ENCODE measurements at regions of chr4 and their contacts with region 1.

Region 1: DNA sequence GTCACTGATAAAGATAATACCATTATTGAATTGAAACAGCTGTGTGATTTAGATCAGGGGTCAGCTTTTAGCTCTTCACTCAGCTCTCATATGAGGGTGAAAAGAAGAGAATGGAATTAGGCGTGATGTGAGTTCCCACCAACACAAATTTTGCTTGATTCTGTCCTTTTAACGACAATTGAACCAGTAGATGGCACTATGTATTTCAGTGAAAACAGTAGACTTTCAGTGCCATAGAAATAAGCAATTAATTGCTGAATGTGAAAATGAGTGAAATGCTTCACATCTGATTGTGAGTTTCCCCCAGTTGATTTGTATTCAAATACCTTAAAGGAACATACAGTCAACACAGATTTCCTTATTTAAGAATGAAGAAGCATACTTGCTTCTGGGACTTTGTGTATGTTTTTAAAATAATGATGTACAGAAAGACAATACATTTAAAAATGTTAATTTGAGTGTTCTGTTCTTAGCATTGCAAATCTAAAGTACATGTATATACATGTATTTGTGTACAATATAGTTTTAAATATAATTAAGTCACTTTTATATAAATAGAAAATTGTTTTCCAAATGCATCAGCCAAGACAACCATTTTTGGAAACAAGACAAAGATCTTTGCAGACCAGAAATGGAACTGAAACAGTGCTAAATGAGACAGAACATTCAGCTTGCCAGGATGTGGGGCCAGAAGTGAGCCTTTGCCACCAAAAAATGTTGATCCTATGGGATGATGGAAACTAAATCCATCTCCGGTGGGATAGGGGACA is 178.8 kb downstream of the SNCA start:
- DNase-seq: no peak
- ATAC-seq: no peak

Region 2: DNA sequence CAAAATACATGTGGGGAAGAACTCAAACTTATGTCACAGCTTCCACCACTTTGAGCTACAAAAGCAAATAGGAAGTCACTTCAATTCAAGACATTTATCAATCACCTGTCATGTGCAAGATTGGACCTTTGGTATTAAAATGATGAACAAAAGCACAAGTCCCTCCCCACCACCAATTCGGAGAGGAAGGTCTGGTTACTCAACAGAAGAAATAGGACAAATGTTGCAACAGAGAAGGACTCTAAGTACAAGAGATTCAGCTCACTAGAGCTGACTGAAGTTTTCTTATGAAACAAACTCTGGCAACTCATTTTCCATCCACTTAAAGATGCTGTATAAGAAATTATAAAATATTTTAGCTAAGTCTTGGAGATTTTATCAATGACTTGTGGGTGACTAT is 220.5 kb after region 1 on chr4:
- intact Hi-C with region 1: loop called (anchors 10 kb)
- DNase-seq: no peak
- ATAC-seq: no peak

Measured in Right ventricle myocardium inferior (tissue), 1 donor.